ENCODE measurements at regions of chr10 and their contacts with region 1.

Region 1: GRCh38 chr10:15898046-15898445 is 37.7 kb upstream of the MINDY3 start:
- DNase-seq: peak; percentile 8
- ATAC-seq: no peak
- H3K4me3 ChIP-seq: no peak overlapping the region
- H3K27ac ChIP-seq: no peak overlapping the region
- H3K4me1 ChIP-seq: no peaks in the 10 kb centered on the region
- H3K27me3 ChIP-seq: no peaks in the 10 kb centered on the region; the same call in 1 of the 2 replicates
- CTCF ChIP-seq: 0 out of 2 replicates have a peak, but pooled peaks have one; percentile 17
- POLR2A ChIP-seq: no peak
- RAD21 ChIP-seq: no peak

Region 2: DNA sequence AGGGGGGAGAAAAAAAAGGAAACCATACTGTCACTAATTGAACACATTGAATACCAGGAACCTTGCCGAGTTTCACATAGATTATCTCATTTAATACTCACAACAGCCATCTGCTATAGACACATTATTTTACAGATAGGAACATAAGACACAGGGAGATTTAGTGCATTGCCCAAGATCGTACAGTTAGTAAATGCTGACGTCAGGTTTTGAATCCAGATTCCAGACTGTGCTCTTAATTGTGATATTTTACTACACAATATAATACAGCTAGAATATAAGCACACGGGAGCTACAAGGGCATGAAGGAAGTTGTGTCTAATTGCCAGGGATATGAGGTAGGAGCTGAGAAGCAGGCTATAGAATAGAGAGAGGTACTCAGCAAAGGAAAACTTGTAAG is 56.1 kb after region 1 on chr10:
- CTCF ChIA-PET with region 1: no interaction called
- POLR2A ChIA-PET with region 1: no interaction called
- dilution Hi-C with region 1: no loop called
- in situ Hi-C with region 1: no loop called
- intact Hi-C with region 1: no loop called
- DNase-seq: no peak
- ATAC-seq: no peak
- H3K4me3 ChIP-seq: no peak overlapping the region
- H3K27ac ChIP-seq: no peak overlapping the region
- H3K4me1 ChIP-seq: no peaks in the 10 kb centered on the region
- H3K27me3 ChIP-seq: no peaks in the 10 kb centered on the region
- CTCF ChIP-seq: no peak
- POLR2A ChIP-seq: no peak
- RAD21 ChIP-seq: no peak

Region 3: DNA sequence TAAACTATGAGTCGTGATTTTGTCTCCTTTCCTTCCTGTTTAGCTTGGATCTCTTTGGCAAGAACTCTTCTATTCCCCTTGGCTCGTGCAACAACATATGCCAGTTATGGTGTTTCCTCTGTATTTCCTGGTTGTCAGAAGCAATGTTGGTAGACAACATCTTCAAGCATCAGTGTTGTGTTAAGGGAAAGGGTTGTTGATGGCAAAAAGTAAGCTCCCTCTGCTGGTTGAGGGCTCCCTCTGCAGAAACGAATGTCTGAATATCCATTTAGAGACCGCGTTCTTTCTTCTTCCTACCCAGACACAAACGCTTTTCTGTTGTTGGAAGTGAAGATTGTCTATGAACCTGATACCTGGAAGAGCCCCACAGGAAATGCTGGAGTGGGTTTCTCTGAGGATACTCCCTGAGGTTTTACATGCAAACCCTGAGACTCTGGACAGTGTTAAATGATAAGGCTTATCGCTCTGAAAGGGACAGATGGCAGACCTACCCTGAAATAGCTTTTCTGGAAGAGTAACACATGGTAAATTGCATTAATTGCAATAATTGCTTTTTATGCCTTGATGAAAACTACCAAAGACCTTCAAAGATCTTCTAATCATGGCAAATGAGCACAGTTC is 647.2 kb after region 1 on chr10:
- CTCF ChIA-PET with region 1: interaction called, 3 read pairs
- POLR2A ChIA-PET with region 1: no interaction called
- dilution Hi-C with region 1: no loop called
- in situ Hi-C with region 1: no loop called
- intact Hi-C with region 1: loop called (anchors 1 kb)
- DNase-seq: peak; percentile 29
- ATAC-seq: peak; percentile 74
- H3K4me3 ChIP-seq: no peak overlapping the region
- H3K27ac ChIP-seq: no peak overlapping the region
- H3K4me1 ChIP-seq: no peaks in the 10 kb centered on the region
- H3K27me3 ChIP-seq: no peaks in the 10 kb centered on the region
- CTCF ChIP-seq: peak; percentile 55
- POLR2A ChIP-seq: no peak
- RAD21 ChIP-seq: peak; percentile 46

Region 4: GRCh38 chr10:16777473-16778370 is 879.7 kb after region 1 on chr10:
- CTCF ChIA-PET with region 1: interaction called, 3 read pairs
- POLR2A ChIA-PET with region 1: no interaction called
- dilution Hi-C with region 1: no loop called
- in situ Hi-C with region 1: loop called (anchors 5 kb)
- intact Hi-C with region 1: loop called (anchors 1 kb)
- DNase-seq: peak; percentile 63
- ATAC-seq: peak; percentile 72
- H3K4me3 ChIP-seq: no peak overlapping the region
- H3K27ac ChIP-seq: no peak overlapping the region; the same call in 1 of the 2 replicates
- H3K4me1 ChIP-seq: peaks cover 4% of the 10 kb centered on the region
- H3K27me3 ChIP-seq: no peaks in the 10 kb centered on the region
- CTCF ChIP-seq: peak; percentile 74
- POLR2A ChIP-seq: no peak
- RAD21 ChIP-seq: peak; percentile 68

Region 5: DNA sequence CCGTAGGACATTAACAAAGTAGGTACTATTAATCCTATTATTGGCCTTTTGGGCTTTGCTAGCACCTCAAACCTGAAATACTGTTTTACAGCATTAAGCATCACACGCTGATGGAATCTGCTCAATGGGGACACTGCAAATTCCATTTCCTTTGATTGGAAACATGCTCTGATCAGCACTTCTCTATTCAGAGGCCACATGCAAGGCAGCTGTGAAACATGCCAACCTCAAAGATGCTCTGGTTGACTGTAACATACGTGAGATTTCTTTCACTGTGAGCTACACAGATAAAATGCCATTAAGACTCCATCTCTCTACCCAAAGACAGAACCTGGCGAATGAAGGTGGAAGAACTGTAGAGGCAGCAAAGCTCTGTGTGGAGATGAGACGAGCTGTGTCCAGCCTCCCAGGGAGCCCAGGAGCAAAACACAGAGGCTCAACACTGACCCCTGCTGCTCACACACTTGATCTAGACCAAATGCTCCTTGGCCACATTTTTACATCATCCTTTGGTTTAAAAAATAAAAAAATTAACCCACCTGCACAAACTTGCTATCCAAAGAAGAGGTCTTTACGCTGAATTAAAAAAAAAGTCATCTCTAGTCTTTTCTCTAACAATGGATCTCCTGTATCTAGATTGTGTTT is 911.1 kb after region 1 on chr10:
- CTCF ChIA-PET with region 1: interaction called, 3 read pairs
- POLR2A ChIA-PET with region 1: no interaction called
- dilution Hi-C with region 1: no loop called
- in situ Hi-C with region 1: no loop called
- intact Hi-C with region 1: loop called (anchors 1 kb)
- DNase-seq: peak; percentile 36
- ATAC-seq: peak; percentile 81
- H3K4me3 ChIP-seq: no peak overlapping the region
- H3K27ac ChIP-seq: no peak overlapping the region
- H3K4me1 ChIP-seq: no peaks in the 10 kb centered on the region
- H3K27me3 ChIP-seq: no peaks in the 10 kb centered on the region
- CTCF ChIP-seq: peak; percentile 63
- POLR2A ChIP-seq: no peak
- RAD21 ChIP-seq: peak; percentile 56

Measured in IMR-90 (cell line).